Psoas muscle (tissue), 8 donors: ENCODE measurements at regions of chr2 and their contacts with region 1.

Region 1: DNA sequence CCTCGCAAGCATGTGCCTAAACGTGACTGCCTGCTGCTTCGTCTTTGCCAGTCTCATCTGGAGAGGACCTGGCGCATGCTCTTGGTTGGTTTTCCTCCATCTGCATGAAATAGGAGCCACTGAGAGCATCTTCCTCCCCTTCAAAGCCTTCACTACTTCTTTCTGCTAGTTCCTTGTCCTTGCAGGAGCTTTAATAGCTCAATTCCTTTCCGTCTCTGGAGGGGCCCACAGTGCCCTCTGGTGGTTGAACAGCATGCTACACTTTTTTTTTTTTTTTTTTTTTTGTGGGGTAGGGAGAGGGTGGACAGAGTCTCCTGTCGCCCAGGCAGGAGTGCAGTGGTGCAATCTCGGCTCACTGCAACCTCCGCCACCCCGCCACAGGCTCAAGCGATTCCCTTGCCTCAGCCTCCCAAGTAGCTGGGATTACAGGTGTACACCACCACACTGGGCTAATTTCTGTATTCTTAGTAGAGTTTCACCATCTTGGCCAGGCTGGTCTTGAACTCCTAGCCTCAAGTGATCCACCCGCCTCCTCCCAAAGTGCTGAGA is 59.6 kb downstream of the SP110 start:
- DNase-seq: no peak
- ATAC-seq: peak in 3 of 4 donors; percentile 41 to 59 (median 53)
- H3K4me3 ChIP-seq: no peak overlapping the region
- H3K27ac ChIP-seq: no peak overlapping the region
- H3K4me1 ChIP-seq: no peaks in the 10 kb centered on the region
- H3K27me3 ChIP-seq: no peaks in the 10 kb centered on the region
- CTCF ChIP-seq: peak; percentile 71

Region 2: GRCh38 chr2:229780856-229781773 is 379.1 kb before region 1 on chr2:
- intact Hi-C with region 1: loop called in 1 of 2 experiments (anchors 10 kb)
- DNase-seq: no peak
- ATAC-seq: peak; percentile 60 to 84 (median 76)
- H3K4me3 ChIP-seq: no peak overlapping the region
- H3K27ac ChIP-seq: no peak overlapping the region
- H3K4me1 ChIP-seq: peaks cover 8% of the 10 kb centered on the region
- H3K27me3 ChIP-seq: no peaks in the 10 kb centered on the region
- CTCF ChIP-seq: peak; percentile 89

Region 3: DNA sequence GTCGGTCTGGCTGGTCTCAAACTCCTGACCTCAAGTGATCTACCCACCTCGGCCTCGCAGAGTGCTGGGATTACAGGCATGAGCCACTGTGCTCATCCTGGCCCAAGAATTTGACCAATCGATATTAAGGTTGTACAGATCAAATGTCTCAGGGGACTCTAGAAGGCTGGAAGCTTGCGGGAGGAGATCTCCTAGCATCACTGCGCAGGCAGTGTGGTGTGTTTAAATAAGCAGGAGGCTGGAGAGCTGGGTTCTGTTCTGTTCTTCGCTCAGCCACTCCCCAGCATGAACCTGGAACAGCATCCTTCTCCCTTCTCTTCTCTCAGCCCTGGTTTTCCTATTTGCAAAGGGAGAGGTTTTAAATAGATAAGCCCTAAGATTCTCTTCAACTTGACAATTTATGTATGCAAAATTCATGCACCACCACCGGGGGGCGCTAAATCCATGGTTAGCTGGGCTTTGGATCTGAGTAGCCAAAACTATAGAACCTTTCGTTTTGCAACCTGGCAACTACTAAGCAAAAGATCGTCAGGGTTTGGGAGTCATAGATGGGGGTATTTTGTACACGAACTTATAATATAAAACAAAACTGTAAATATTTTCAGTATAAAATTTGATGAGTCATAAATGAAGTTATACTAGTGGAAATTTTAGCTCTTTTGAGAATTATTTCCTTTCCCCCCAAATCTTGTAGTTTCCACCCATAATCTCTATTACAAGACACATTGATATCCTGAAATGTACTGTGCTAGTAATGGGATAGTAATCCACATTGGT is 152.1 kb before region 1 on chr2:
- intact Hi-C with region 1: loop called (anchors 2 to 5 kb)
- DNase-seq: peak; percentile 68 to 72
- ATAC-seq: peak; percentile 44 to 57 (median 48)
- H3K4me3 ChIP-seq: peak overlapping the region; percentile 35
- H3K27ac ChIP-seq: no peak overlapping the region
- H3K4me1 ChIP-seq: no peaks in the 10 kb centered on the region
- H3K27me3 ChIP-seq: no peaks in the 10 kb centered on the region
- CTCF ChIP-seq: peak; percentile 73

Region 4: DNA sequence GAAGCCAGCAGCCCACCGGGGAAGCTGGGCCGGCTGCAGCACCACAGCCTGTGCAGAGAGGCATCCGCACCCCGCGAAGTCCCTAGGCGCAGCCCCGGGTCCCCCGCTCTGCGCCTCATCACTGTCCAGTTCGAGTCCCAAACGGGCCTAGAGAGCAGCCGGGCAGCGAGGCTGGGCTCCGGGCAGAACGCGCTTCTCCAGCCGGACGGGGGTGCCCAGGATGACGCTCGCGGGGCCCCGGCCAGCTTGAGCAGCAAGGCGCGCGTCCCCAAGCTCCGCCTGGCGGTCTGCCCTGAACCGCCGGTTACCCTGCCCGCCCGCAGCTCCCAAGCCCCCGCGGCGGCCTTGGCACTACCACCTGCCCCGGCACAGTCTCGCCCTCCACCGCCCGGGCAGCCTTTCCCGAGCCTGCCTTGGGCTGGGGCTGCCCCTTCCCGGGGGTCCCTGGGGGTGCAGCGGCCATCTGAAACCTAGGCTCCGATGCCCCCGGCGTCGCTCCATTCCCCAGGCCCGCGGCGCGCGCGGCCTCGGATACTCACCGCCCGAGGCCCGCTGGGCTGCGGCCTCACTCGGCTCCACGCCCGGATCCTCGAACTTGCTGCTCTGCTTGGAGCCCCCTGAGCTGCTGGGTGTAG is 92.1 kb before region 1 on chr2:
- intact Hi-C with region 1: loop called (anchors 2 to 5 kb)
- DNase-seq: peak; percentile 35 to 69
- ATAC-seq: peak; percentile 27 to 72 (median 48)
- H3K4me3 ChIP-seq: peak overlapping the region; percentile 69
- H3K27ac ChIP-seq: no peak overlapping the region
- H3K4me1 ChIP-seq: peaks cover 12% of the 10 kb centered on the region
- H3K27me3 ChIP-seq: peaks cover 0 to 25% (median 4%) of the 10 kb centered on the region in 3 donors
- CTCF ChIP-seq: peak; percentile 7

Region 5: GRCh38 chr2:230268606-230269243 is 108.5 kb after region 1 on chr2:
- intact Hi-C with region 1: no loop called
- DNase-seq: no peak
- ATAC-seq: no peak
- H3K4me3 ChIP-seq: no peak overlapping the region
- H3K27ac ChIP-seq: no peak overlapping the region
- H3K4me1 ChIP-seq: no peaks in the 10 kb centered on the region
- H3K27me3 ChIP-seq: no peaks in the 10 kb centered on the region
- CTCF ChIP-seq: no peak